Activated CD8-positive, alpha-beta memory T cell treated with anti-CD3 and anti-CD28 coated beads, Interleukin-2, amount 10 ng/mL, durations not matched to agents 7 days and 5 days (primary cell): ENCODE measurements at regions of chr3 and their contacts with region 1.

Region 1: GRCh38 chr3:49802719-49803464 is at the start of gene INKA1:
- DNase-seq: peak; percentile 93
- ATAC-seq: peak; percentile 89
- H3K4me3 Mint-ChIP-seq: peak within 1 kb of the TSS; percentile 80
- H3K27ac Mint-ChIP-seq: peak within 1 kb of the TSS; percentile 76
- H3K4me1 Mint-ChIP-seq: peaks cover 31% of the 10 kb centered on the region
- H3K27me3 Mint-ChIP-seq: peaks cover 11% of the 10 kb centered on the region
- total RNA-seq, gene INKA1: 0.73 to 0.85 TPM

Region 2: GRCh38 chr3:49626101-49626581 is 176.8 kb before region 1 on chr3:
- CTCF ChIA-PET with region 1: no interaction called
- DNase-seq: no peak
- ATAC-seq: no peak
- H3K4me3 Mint-ChIP-seq: no peak overlapping the region
- H3K27ac Mint-ChIP-seq: no peak overlapping the region
- H3K4me1 Mint-ChIP-seq: peaks cover 16% of the 10 kb centered on the region
- H3K27me3 Mint-ChIP-seq: peaks cover 13% of the 10 kb centered on the region

Region 3: GRCh38 chr3:49761661-49762060 is 41.2 kb before region 1 on chr3:
- CTCF ChIA-PET with region 1: no interaction called
- DNase-seq: no peak
- ATAC-seq: no peak
- H3K4me3 Mint-ChIP-seq: no peak overlapping the region
- H3K27ac Mint-ChIP-seq: no peak overlapping the region
- H3K4me1 Mint-ChIP-seq: peaks cover 2% of the 10 kb centered on the region
- H3K27me3 Mint-ChIP-seq: no peaks in the 10 kb centered on the region

Region 4: GRCh38 chr3:49786241-49786958 is 16.5 kb before region 1 on chr3 and contains the start of gene IP6K1:
- CTCF ChIA-PET with region 1: interaction called, 27 read pairs
- DNase-seq: peak; percentile 100
- ATAC-seq: peak; percentile 99
- H3K4me3 Mint-ChIP-seq: peak within 1 kb of the TSS; percentile 77
- H3K27ac Mint-ChIP-seq: peak within 1 kb of the TSS; percentile 92
- H3K4me1 Mint-ChIP-seq: peaks cover 30% of the 10 kb centered on the region
- H3K27me3 Mint-ChIP-seq: no peaks in the 10 kb centered on the region
- total RNA-seq, gene IP6K1: 38.3 to 41.0 TPM

Region 5: GRCh38 chr3:49826016-49826415 is 23.1 kb after region 1 on chr3:
- CTCF ChIA-PET with region 1: interaction called, 86 read pairs
- DNase-seq: no peak
- ATAC-seq: no peak
- H3K4me3 Mint-ChIP-seq: no peak overlapping the region
- H3K27ac Mint-ChIP-seq: no peak overlapping the region
- H3K4me1 Mint-ChIP-seq: no peaks in the 10 kb centered on the region
- H3K27me3 Mint-ChIP-seq: no peaks in the 10 kb centered on the region

Region 6: GRCh38 chr3:49856181-49857005 is 53.5 kb after region 1 on chr3 and contains the start of gene TRAIP:
- CTCF ChIA-PET with region 1: interaction called, 14 read pairs
- DNase-seq: peak; percentile 96
- ATAC-seq: peak; percentile 98
- H3K4me3 Mint-ChIP-seq: peak within 1 kb of the TSS; percentile 97
- H3K27ac Mint-ChIP-seq: peak within 1 kb of the TSS; percentile 92
- H3K4me1 Mint-ChIP-seq: peaks cover 22% of the 10 kb centered on the region
- H3K27me3 Mint-ChIP-seq: no peaks in the 10 kb centered on the region
- total RNA-seq, gene TRAIP: 27.3 to 32.0 TPM

Region 7: GRCh38 chr3:49886922-49887265 is 84.0 kb after region 1 on chr3:
- CTCF ChIA-PET with region 1: no interaction called
- DNase-seq: no peak
- ATAC-seq: no peak
- H3K4me3 Mint-ChIP-seq: no peak overlapping the region
- H3K27ac Mint-ChIP-seq: no peak overlapping the region
- H3K4me1 Mint-ChIP-seq: peaks cover 5% of the 10 kb centered on the region
- H3K27me3 Mint-ChIP-seq: no peaks in the 10 kb centered on the region

Region 8: DNA sequence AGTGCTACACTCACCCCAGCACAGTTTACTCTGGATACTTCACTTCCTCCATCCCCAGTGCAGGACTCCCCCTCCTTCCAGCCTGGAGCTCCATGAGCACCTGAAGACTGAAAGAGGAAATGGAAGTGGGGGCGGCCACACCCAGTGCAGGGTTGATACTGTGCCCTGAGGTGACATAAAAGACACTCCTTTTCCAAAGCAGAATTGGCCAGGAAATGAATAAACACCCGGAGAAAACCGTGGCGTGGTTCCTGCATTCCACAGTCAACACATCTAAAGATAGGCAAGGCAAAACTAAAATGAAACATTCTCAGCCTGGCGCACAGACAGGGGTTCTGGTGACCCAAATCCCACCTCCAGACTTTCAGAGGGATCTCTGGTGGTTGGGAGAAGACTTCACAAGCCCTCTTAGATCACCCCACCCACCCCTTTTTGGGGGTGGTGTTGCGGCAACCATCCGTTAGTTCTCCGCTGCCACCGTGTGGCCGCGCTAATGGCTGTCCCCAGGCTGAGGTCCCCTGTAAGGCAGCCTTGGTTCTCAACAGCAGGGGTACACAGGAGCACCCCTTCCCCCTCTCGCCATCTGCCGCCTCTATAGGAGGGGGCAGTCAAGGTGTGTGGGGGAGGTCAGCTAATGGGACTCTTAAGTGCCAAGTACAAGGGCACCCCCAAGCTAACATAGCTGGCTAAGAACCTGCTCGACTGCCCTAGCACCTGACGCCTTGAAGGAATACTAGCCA is 103.3 kb after region 1 on chr3:
- CTCF ChIA-PET with region 1: interaction called, 25 read pairs
- DNase-seq: peak; percentile 70
- ATAC-seq: peak; percentile 34
- H3K4me3 Mint-ChIP-seq: peak overlapping the region; percentile 54
- H3K27ac Mint-ChIP-seq: peak overlapping the region; percentile 71
- H3K4me1 Mint-ChIP-seq: peaks cover 35% of the 10 kb centered on the region
- H3K27me3 Mint-ChIP-seq: no peaks in the 10 kb centered on the region